Activated CD4-positive, alpha-beta memory T cell treated with anti-CD3 and anti-CD28 coated beads for 36 hours (primary cell): ENCODE measurements at regions of chrX and their contacts with region 1.

Region 1: DNA sequence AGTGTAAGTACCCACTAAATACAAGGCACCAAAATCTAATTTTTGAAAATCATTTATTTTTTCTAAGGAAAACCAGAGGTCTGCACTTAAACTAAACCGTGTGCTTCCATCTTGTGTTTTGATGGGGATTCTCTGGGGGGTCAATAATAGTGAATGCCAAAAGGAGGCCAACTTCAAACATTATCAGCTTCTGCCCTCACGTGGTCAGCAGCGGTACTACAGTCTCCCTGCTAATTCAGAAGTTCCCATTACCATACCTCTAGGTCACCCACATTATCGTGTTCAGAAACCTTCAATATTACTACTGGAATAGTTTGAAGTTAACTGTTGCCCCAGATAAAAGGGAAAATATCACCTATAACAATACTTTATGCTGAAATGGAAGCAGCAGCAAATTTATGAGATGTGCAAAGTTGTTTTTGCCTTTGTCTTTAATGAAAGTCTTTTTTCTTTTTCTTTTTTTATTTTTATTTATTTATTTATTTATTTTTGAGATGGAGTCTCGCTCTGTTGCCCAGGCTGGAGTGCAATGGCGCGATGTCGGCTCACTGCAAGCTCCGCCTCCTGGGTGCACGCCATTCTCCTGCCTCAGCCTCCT is 17.3 kb downstream of the CTPS2 start:
- DNase-seq: peak; percentile 65
- H3K4me3 Mint-ChIP-seq: no peak overlapping the region
- H3K27ac Mint-ChIP-seq: no peak overlapping the region
- H3K4me1 Mint-ChIP-seq: no peaks in the 10 kb centered on the region
- H3K27me3 Mint-ChIP-seq: no peaks in the 10 kb centered on the region

Region 2: DNA sequence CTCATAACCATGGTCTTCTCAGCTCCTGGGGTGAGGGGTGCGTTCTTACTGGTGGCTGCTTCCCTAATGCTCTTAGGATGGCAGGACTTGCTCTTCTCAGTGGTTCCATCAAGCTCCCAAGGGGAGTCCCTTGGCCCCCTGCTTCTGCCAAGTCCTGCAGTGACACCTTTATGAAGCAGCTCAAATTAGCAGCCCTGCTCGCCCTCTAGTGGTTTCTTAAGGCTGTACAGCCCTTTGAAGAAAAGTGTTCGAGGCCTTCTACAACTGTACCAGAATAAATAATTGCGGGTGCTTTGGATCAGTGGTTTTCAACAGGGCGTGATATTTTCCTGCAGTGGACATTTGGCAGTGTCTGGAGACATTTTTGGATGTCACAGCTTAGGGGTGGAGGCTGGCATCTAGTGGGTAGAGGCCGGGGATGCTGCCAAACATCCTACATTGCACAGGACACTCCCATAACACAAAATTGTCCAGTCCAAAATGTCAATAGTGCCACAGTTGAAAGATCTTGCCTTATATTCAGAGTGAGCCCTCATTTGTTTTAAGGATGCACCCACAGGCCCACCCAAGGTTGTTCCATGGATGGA is 249.9 kb before region 1 on chrX:
- CTCF ChIA-PET with region 1: interaction called, 3 read pairs
- POLR2A ChIA-PET with region 1: no interaction called
- intact Hi-C with region 1: loop called (anchors 2 kb)
- DNase-seq: peak; percentile 48
- H3K4me3 Mint-ChIP-seq: no peak overlapping the region
- H3K27ac Mint-ChIP-seq: no peak overlapping the region
- H3K4me1 Mint-ChIP-seq: peaks cover 6% of the 10 kb centered on the region
- H3K27me3 Mint-ChIP-seq: no peaks in the 10 kb centered on the region

Region 3: DNA sequence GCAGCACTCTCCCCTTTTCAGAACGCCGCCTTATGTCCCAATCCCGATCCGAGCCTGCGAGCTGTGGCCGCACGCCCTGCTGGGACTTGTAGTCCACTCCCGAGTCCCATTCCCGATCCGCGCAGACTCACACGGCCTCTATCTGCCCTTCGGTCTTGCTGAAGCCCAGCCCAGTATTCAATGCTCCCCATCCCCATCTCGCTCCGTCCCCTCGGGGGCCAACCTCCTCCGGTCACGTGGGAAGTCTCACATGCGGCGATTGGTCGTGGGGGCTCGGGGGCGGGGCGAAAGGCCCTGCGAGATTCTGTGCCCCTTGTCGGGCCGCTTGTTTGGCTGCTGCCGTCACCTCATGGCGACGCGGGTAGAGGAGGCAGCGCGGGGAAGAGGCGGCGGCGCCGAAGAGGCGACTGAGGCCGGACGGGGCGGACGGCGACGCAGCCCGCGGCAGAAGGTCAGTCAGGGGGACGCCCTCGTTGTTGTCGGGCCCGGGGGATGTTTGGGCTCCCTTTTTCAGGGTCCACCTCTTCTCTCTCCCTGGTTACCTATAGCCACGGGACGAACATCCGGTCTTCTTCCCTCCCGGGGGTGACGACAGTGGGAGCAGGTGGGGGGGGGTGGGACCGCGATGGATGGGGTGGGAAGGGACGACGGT is 91.1 kb after region 1 on chrX and contains the start of gene TXLNG:
- CTCF ChIA-PET with region 1: no interaction called
- POLR2A ChIA-PET with region 1: no interaction called
- intact Hi-C with region 1: no loop called
- DNase-seq: peak; percentile 96
- H3K4me3 Mint-ChIP-seq: peak within 1 kb of the TSS; percentile 86
- H3K27ac Mint-ChIP-seq: peak within 1 kb of the TSS; percentile 77
- H3K4me1 Mint-ChIP-seq: peaks cover 10% of the 10 kb centered on the region
- H3K27me3 Mint-ChIP-seq: no peaks in the 10 kb centered on the region
- total RNA-seq, gene TXLNG: 14.2 to 15.1 TPM